GM12878 (cell line): ENCODE measurements at regions of chr5 and their contacts with region 1.

Region 1: GRCh38 chr5:139968547-139969261 is 74.4 kb downstream of the NRG2 start:
- DNase-seq: peak; percentile 43
- ATAC-seq: peak; percentile 97
- H3K4me3 ChIP-seq: no peak overlapping the region
- H3K27ac ChIP-seq: no peak overlapping the region
- H3K4me1 ChIP-seq: peaks cover 10% of the 10 kb centered on the region
- H3K27me3 ChIP-seq: no peaks in the 10 kb centered on the region
- CTCF ChIP-seq: peak; percentile 100; a peak in 5 of 6 replicates
- EP300 ChIP-seq: no peak
- POLR2A ChIP-seq: no peak
- RAD21 ChIP-seq: peak; percentile 97

Region 2: DNA sequence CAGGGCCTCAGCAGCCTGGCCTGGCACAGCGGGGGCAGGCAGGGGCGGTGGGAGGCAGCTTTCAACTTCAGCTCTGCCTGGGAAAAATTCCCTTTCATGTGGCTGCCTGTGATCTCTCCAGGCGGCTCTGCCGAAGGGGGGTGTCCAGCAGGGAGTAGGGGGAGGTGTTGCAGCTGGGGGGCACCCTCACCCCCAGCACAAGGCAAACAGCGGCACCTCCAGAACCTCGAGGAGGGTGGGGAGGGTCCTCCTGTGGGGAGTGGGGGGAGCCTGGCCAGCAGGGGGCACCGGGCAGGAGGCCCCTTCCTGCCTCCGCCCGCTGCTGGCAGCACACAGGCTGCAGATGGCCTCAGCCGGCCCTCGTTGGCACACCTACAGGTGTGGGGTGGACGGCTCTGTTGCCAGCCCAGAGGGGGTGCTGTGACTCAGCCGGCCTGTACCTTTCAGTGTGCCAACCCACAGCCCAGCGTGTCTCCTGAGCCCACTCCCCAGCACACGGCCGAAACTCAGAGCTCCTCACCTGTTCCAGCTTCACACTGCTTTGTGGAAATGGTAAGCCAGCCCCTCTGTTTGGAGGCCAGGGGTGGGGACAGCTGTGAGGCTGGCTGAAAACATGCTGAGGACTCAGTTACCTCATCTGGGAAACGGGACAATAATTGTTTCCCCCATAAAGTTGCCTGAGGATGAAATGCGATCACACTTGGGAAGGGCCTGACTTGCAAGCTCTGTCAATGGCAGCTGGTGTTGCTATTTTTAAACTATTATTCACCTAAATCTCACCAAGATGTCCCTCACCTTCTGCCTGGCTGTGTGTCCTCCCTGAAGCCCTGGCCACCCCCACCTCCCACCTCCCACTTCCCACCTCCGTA is 283.6 kb before region 1 on chr5:
- CTCF ChIA-PET with region 1: no interaction called
- POLR2A ChIA-PET with region 1: no interaction called
- RAD21 ChIA-PET with region 1: no interaction called
- SMC1A ChIA-PET with region 1: no interaction called
- in situ Hi-C with region 1: no loop called
- intact Hi-C with region 1: no loop called
- DNase-seq: no peak
- ATAC-seq: no peak
- H3K4me3 ChIP-seq: no peak overlapping the region
- H3K27ac ChIP-seq: no peak overlapping the region
- H3K4me1 ChIP-seq: peaks cover 12% of the 10 kb centered on the region
- H3K27me3 ChIP-seq: no peaks in the 10 kb centered on the region
- CTCF ChIP-seq: 0 out of 6 replicates have a peak, but pooled peaks of 1 of the 3 experiments have one; percentile 21
- EP300 ChIP-seq: no peak
- POLR2A ChIP-seq: peak; percentile 55; the same call in 1 of the 2 replicates
- RAD21 ChIP-seq: no peak

Region 3: DNA sequence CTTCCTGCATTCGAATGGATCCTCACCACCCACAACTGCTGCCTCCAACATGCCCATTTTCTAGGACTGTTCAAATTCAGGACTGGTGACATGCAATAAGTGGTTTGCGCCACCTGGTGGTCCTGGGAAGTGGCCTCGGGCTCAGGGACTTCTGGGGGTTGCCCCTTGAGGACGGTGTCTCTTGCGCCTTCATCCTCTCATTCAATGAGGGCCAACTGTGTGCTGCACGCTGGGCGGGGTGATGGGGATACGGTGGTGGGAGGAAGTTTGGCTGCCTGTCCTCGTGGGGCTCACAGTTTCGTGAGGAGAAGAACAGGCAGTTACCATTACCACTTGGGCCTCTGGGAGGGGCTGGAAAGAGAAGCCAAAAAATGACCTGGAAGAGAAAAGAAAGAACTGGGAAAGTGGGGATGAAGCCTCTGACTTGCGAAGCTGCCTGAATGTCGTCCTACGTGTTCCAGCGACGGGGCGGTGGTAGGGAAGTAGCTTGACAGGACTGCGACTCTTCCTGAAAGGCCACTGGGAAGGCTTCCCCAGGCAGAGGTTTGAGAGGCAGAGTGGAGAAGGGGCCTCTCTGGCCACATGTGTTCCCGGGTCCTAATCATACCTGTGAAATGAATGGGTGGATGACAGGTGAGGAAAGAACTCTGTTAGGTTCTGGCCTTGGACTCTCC is 124.1 kb before region 1 on chr5:
- CTCF ChIA-PET with region 1: interaction called, 85 read pairs
- POLR2A ChIA-PET with region 1: no interaction called
- RAD21 ChIA-PET with region 1: interaction called, 18 read pairs
- SMC1A ChIA-PET with region 1: interaction called, 16 read pairs
- in situ Hi-C with region 1: no loop called
- intact Hi-C with region 1: loop called (anchors 1 kb)
- DNase-seq: peak; percentile 23
- ATAC-seq: peak; percentile 82
- H3K4me3 ChIP-seq: no peak overlapping the region
- H3K27ac ChIP-seq: no peak overlapping the region
- H3K4me1 ChIP-seq: peaks cover 12% of the 10 kb centered on the region
- H3K27me3 ChIP-seq: no peaks in the 10 kb centered on the region; a peak in 1 of 4 replicates
- CTCF ChIP-seq: peak; percentile 85 to 93 (median 89)
- EP300 ChIP-seq: no peak
- POLR2A ChIP-seq: no peak
- RAD21 ChIP-seq: peak; percentile 82

Region 4: GRCh38 chr5:139881143-139881733 is 87.5 kb before region 1 on chr5:
- CTCF ChIA-PET with region 1: interaction called, 50 read pairs
- POLR2A ChIA-PET with region 1: no interaction called
- RAD21 ChIA-PET with region 1: interaction called, 4 read pairs
- SMC1A ChIA-PET with region 1: interaction called, 4 read pairs
- in situ Hi-C with region 1: no loop called
- intact Hi-C with region 1: no loop called
- DNase-seq: no peak
- ATAC-seq: no peak
- H3K4me3 ChIP-seq: no peak overlapping the region
- H3K27ac ChIP-seq: no peak overlapping the region
- H3K4me1 ChIP-seq: peaks cover 2% of the 10 kb centered on the region; the same call in 1 of the 2 replicates
- H3K27me3 ChIP-seq: no peaks in the 10 kb centered on the region
- CTCF ChIP-seq: no peak
- EP300 ChIP-seq: no peak
- POLR2A ChIP-seq: no peak
- RAD21 ChIP-seq: 0 out of 2 replicates have a peak, but pooled peaks have one; percentile 21

Region 5: GRCh38 chr5:139942243-139942642 is 26.5 kb before region 1 on chr5:
- CTCF ChIA-PET with region 1: interaction called, 17 read pairs
- POLR2A ChIA-PET with region 1: no interaction called
- RAD21 ChIA-PET with region 1: interaction called, 7 read pairs
- SMC1A ChIA-PET with region 1: interaction called, 6 read pairs
- in situ Hi-C with region 1: no loop called
- intact Hi-C with region 1: no loop called
- DNase-seq: no peak
- ATAC-seq: no peak
- H3K4me3 ChIP-seq: no peak overlapping the region
- H3K27ac ChIP-seq: no peak overlapping the region
- H3K4me1 ChIP-seq: peaks cover 7% of the 10 kb centered on the region
- H3K27me3 ChIP-seq: no peaks in the 10 kb centered on the region
- CTCF ChIP-seq: no peak
- EP300 ChIP-seq: no peak
- POLR2A ChIP-seq: no peak
- RAD21 ChIP-seq: no peak

Region 6: DNA sequence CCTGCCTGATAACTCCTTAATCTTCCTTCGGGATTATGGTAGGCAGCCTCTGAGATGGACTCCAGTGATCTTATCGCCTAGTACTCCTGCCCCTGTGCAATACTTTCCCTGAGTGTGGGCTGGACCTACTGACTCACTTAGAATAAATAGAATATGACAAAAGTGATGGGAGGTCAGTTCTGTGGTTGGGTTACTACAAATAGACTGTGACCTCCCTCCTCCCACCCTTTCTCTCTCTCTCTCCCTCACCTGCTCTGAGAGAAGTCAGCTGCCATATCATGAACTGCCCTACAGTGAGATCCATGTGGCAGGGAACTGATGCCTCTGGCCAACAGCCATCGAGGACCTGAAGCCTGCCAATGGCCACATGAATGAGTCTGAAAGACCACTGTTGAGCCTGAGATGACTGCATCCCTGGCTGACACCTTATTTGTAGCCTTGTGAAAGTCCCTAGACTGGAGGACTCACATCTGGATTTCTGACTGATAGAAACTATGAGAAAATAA is 42.6 kb after region 1 on chr5:
- CTCF ChIA-PET with region 1: interaction called, 88 read pairs
- POLR2A ChIA-PET with region 1: no interaction called
- RAD21 ChIA-PET with region 1: interaction called, 14 read pairs
- SMC1A ChIA-PET with region 1: interaction called, 30 read pairs
- in situ Hi-C with region 1: no loop called
- intact Hi-C with region 1: no loop called
- DNase-seq: peak; percentile 83
- ATAC-seq: peak; percentile 95
- H3K4me3 ChIP-seq: no peak overlapping the region
- H3K27ac ChIP-seq: peak overlapping the region; percentile 63
- H3K4me1 ChIP-seq: peaks cover 17% of the 10 kb centered on the region
- H3K27me3 ChIP-seq: no peaks in the 10 kb centered on the region
- CTCF ChIP-seq: no peak
- EP300 ChIP-seq: peak; percentile 72 to 83
- POLR2A ChIP-seq: 0 out of 2 replicates have a peak, but pooled peaks have one; percentile 23
- RAD21 ChIP-seq: no peak; the same call in 1 of the 2 replicates

Region 7: DNA sequence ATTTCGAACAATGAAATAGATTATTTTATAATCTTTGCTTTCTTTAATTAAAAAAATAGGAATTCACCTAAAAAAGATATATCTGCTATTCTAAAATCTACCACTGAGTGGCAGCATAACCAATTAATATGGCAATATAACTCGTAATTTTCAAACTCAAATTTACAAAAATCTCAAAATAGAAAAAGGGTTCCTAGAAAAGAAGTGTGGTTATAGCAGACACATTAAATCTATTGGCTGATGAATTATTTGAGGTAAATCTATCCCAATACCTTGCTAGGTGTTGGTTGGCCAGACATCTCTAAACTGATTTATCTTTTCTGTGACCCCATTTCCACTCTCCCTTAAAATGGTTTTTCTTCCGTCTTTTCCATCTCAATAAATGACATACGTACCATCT is 104.6 kb after region 1 on chr5:
- CTCF ChIA-PET with region 1: interaction called, 28 read pairs
- POLR2A ChIA-PET with region 1: no interaction called
- RAD21 ChIA-PET with region 1: interaction called, 8 read pairs
- SMC1A ChIA-PET with region 1: interaction called, 14 read pairs
- in situ Hi-C with region 1: no loop called
- intact Hi-C with region 1: no loop called
- DNase-seq: no peak
- ATAC-seq: no peak
- H3K4me3 ChIP-seq: no peak overlapping the region
- H3K27ac ChIP-seq: no peak overlapping the region
- H3K4me1 ChIP-seq: no peaks in the 10 kb centered on the region
- H3K27me3 ChIP-seq: peaks cover 0 to 3% of the 10 kb centered on the region in 2 experiments; a peak in 1 of 4 replicates
- CTCF ChIP-seq: peak in 2 of 3 experiments; percentile 28 to 34; a peak in 2 of 6 replicates
- EP300 ChIP-seq: no peak
- POLR2A ChIP-seq: no peak
- RAD21 ChIP-seq: peak; percentile 51